ENCODE measurements at regions of chr19 and their contacts with region 1.

Region 1: DNA sequence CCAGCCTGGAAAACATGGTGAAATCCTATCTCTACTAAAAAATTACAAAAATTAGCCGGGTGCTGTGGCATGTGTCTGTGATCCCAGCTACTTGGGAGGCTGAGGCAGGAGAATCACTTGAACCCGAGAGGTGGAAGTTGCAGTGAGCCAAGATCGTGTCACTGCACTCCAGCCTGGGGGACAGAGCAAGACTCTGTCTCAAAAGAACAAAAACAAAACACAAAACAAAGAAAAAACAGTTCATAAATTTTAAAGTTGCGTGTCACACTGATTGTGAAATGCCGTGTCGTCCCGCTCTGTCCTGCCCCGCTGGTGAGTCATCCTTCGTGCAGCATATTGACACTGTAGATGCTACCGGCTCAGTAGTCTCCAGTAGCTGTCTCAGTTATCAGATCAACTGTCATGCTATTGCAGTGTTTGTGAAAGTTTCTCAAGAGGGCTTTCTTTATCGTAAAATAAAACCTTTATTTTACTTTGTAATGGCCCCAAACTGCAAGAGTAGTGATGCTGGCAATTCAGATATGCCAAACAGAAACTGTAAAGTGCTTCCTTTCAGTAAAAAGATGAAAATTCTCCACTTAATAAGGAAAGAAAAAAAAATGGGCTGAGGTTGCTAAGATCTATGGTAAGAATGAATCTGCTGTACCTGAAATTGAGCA is 36.4 kb upstream of the IGFL1 start:
- DNase-seq: no peak
- CTCF ChIP-seq: no peak

Region 2: GRCh38 chr19:46076951-46077816 is 115.9 kb before region 1 on chr19:
- in situ Hi-C with region 1: loop called (anchors 25 kb)
- DNase-seq: peak; percentile 75
- CTCF ChIP-seq: peak; percentile 49

Measured in GM13977 (cell line).